Activated CD4-positive, alpha-beta memory T cell treated with anti-CD3 and anti-CD28 coated beads for 36 hours (primary cell): ENCODE measurements at regions of chr17 and their contacts with region 1.

Region 1: GRCh38 chr17:39769974-39770587 is 32.3 kb downstream of the GRB7 start:
- DNase-seq: peak; percentile 82
- H3K4me3 Mint-ChIP-seq: no peak overlapping the region
- H3K27ac Mint-ChIP-seq: peak overlapping the region; percentile 85
- H3K4me1 Mint-ChIP-seq: peaks cover 96% of the 10 kb centered on the region
- H3K27me3 Mint-ChIP-seq: no peaks in the 10 kb centered on the region

Region 2: GRCh38 chr17:39722965-39723848 is 46.9 kb before region 1 on chr17:
- CTCF ChIA-PET with region 1: no interaction called
- POLR2A ChIA-PET with region 1: no interaction called
- intact Hi-C with region 1: no loop called
- DNase-seq: peak; percentile 22
- H3K4me3 Mint-ChIP-seq: no peak overlapping the region
- H3K27ac Mint-ChIP-seq: no peak overlapping the region
- H3K4me1 Mint-ChIP-seq: no peaks in the 10 kb centered on the region
- H3K27me3 Mint-ChIP-seq: no peaks in the 10 kb centered on the region

Region 3: DNA sequence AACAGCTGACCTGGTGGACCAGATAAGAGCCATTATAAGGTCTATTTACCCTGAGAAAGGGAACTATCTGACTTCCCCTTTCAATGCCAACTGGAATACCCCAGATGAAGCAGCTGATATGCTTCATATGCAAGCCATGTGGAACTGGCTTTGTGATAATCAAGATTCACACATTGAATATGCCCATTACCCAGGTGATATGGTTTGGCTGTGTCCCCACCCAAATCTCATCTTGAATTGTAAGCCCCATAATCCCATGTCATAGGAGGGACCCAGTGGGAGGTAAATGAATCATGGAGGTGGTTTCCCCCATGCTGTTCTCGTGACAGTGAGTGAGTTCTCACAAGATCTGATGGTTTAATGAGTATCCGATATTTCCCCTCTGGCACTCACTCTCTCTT is 52.0 kb after region 1 on chr17:
- CTCF ChIA-PET with region 1: interaction called, 10 read pairs
- POLR2A ChIA-PET with region 1: interaction called, 19 read pairs
- intact Hi-C with region 1: no loop called
- DNase-seq: peak; percentile 50
- H3K4me3 Mint-ChIP-seq: no peak overlapping the region
- H3K27ac Mint-ChIP-seq: peak overlapping the region; percentile 38
- H3K4me1 Mint-ChIP-seq: peaks cover 60% of the 10 kb centered on the region
- H3K27me3 Mint-ChIP-seq: no peaks in the 10 kb centered on the region

Region 4: DNA sequence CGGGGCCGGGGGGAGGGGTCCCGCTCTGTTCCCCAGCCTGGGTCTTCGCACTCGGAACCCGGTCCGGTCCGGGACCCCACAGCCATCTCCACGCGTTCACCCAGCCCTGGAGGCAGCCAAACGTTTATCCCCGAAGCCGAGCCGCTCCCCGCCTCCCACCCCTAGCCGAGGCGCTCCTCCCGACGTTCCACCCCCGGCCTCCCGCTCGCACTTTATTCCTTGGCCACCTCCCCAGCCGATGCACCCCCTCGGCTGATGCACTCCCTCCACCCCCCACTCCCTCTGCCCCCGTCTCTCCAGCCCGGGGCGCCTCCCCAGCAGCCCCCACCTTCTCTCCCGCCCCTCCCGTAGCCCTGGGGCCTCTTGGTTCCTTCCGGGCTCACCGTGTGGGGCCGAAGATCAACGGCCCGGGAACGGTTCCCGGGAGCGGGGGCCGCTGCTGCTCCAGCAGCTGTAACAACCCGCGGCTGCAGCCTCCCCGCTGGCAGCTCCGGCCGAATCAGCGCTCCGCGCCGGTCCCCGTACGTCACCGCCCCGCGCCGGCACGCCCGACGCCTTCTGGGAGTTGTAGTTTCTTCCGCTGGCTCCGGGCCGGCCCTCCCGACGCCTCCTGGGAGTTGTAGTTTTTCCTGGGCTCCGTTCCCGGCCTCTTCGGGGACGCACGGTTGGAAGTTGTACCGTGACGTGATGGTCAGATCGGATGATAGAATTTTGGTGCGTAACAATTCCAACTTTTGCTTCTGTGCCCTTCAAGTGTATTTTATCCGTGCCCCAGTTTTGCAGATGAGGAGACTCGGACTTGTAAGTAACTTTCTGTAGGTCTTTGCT is 157.2 kb after region 1 on chr17 and contains the starts of genes LRRC3C and ORMDL3:
- CTCF ChIA-PET with region 1: no interaction called
- POLR2A ChIA-PET with region 1: no interaction called
- intact Hi-C with region 1: loop called (anchors 5 kb)
- DNase-seq: peak; percentile 95
- H3K4me3 Mint-ChIP-seq: peak within 1 kb of the TSS; percentile 85
- H3K27ac Mint-ChIP-seq: peak within 1 kb of the TSS; percentile 90
- H3K4me1 Mint-ChIP-seq: peaks cover 52% of the 10 kb centered on the region
- H3K27me3 Mint-ChIP-seq: no peaks in the 10 kb centered on the region
- total RNA-seq, gene LRRC3C: not detected
- total RNA-seq, gene ORMDL3: 53.7 to 58.3 TPM

Region 5: DNA sequence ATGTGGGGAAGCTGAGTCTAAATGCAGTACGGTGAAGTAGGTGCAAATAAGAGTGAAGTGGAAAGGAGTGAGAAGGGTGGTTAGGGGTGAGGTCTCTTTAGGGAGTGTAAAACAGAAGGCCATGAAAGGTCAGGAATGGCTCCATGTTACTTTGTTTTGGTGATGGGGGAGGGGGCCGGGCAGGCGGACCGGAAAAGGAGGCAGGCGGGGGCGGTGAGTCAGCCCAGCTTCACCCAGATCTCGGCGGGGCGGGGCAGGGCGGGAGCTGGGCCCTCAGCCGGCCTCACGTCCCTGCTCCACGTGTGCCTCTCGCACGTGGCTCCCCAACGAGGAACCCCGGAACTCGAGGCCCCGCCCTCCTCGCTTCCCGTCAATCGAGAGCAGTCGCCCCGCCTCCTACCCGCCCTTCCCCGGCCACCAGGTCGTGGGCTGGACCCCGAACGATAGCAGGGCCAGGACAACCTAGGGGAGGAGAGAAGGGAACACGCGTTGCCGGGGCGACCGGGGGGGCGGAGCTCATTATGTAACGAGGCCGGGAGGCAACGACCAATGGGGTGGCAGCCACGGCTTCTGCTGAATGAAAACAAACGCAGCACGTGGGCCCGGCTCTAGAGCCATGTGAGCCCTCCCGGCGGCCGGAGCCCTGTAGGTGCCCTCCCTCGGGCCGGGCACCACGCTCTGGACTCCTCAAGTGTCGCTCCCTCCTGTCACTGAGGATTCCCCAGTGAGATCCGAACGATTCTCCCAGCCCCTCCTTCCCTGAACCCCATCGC is 329.0 kb after region 1 on chr17:
- CTCF ChIA-PET with region 1: no interaction called
- POLR2A ChIA-PET with region 1: no interaction called
- intact Hi-C with region 1: loop called (anchors 5 kb)
- DNase-seq: peak; percentile 99
- H3K4me3 Mint-ChIP-seq: peak overlapping the region; percentile 88
- H3K27ac Mint-ChIP-seq: peak overlapping the region; percentile 91
- H3K4me1 Mint-ChIP-seq: peaks cover 85% of the 10 kb centered on the region
- H3K27me3 Mint-ChIP-seq: no peaks in the 10 kb centered on the region